K562 (cell line): ENCODE measurements at regions of chr3 and their contacts with region 1.

Region 1: GRCh38 chr3:196518966-196519717 is 4.0 kb upstream of the SMCO1 start:
- DNase-seq: peak; percentile 77 to 95 (median 80)
- ATAC-seq: peak; percentile 89
- H3K4me3 ChIP-seq: no peak overlapping the region
- H3K27ac ChIP-seq: peak overlapping the region; percentile 61; the same call in 2 of the 3 replicates
- H3K4me1 ChIP-seq: peaks cover 12 to 48% of the 10 kb centered on the region in 2 experiments
- H3K27me3 ChIP-seq: no peaks in the 10 kb centered on the region
- CTCF ChIP-seq: peak; percentile 78 to 96 (median 83)
- EP300 ChIP-seq: 0 out of 2 replicates have a peak, but pooled peaks have one; percentile 37
- POLR2A ChIP-seq: no peak
- RAD21 ChIP-seq: peak; percentile 96 to 97

Region 2: DNA sequence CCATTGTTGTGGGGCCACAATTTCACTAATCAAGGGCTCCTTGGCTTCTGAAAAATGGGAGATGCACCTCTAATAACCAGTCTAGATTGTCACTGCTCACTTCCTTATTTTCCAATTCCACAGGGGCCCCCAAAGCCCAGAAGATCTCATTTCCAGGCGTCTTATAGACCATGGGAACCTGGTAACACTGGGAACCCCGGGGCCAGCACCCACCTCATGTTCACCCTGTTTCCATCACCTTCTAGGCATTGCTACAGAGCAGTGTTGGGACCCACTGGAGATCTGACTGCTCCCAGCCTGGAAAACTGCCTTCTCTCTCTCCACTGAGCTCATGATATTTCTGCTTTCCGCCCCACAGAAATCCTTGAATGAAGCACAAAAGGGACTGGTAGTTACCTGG is 498.8 kb before region 1 on chr3:
- CTCF ChIA-PET with region 1: interaction called, 7 read pairs
- POLR2A ChIA-PET with region 1: no interaction called
- in situ Hi-C with region 1: loop called (anchors 5 kb)
- intact Hi-C with region 1: loop called (anchors 1 kb)
- DNase-seq: no peak
- ATAC-seq: no peak
- H3K4me3 ChIP-seq: no peak overlapping the region
- H3K27ac ChIP-seq: no peak overlapping the region
- H3K4me1 ChIP-seq: peaks cover 6 to 7% of the 10 kb centered on the region in 2 experiments; a peak in 4 of 5 replicates
- H3K27me3 ChIP-seq: no peaks in the 10 kb centered on the region
- CTCF ChIP-seq: no peak
- EP300 ChIP-seq: no peak
- POLR2A ChIP-seq: no peak
- RAD21 ChIP-seq: no peak

Region 3: GRCh38 chr3:196202516-196202970 is 316.6 kb before region 1 on chr3:
- CTCF ChIA-PET with region 1: interaction called, 3 read pairs
- POLR2A ChIA-PET with region 1: interaction called, 3 read pairs
- in situ Hi-C with region 1: no loop called
- intact Hi-C with region 1: loop called (anchors 2 kb)
- DNase-seq: no peak
- ATAC-seq: peak; percentile 33
- H3K4me3 ChIP-seq: no peak overlapping the region
- H3K27ac ChIP-seq: no peak overlapping the region
- H3K4me1 ChIP-seq: peaks cover 7 to 33% of the 10 kb centered on the region in 2 experiments; a peak in 4 of 5 replicates
- H3K27me3 ChIP-seq: no peaks in the 10 kb centered on the region
- CTCF ChIP-seq: no peak
- EP300 ChIP-seq: no peak
- POLR2A ChIP-seq: no peak
- RAD21 ChIP-seq: no peak

Region 4: GRCh38 chr3:196423044-196423781 is 95.9 kb before region 1 on chr3:
- CTCF ChIA-PET with region 1: no interaction called
- POLR2A ChIA-PET with region 1: no interaction called
- in situ Hi-C with region 1: no loop called
- intact Hi-C with region 1: no loop called
- DNase-seq: peak in 2 of 4 experiments; percentile 33 to 41
- ATAC-seq: peak; percentile 71
- H3K4me3 ChIP-seq: no peak overlapping the region
- H3K27ac ChIP-seq: no peak overlapping the region; the same call in 2 of the 3 replicates
- H3K4me1 ChIP-seq: peaks cover 14 to 17% of the 10 kb centered on the region in 2 experiments; a peak in 4 of 5 replicates
- H3K27me3 ChIP-seq: no peaks in the 10 kb centered on the region
- CTCF ChIP-seq: 0 out of 6 replicates have a peak, but pooled peaks of 1 of the 3 experiments have one; percentile 5
- EP300 ChIP-seq: no peak
- POLR2A ChIP-seq: no peak
- RAD21 ChIP-seq: no peak

Region 5: DNA sequence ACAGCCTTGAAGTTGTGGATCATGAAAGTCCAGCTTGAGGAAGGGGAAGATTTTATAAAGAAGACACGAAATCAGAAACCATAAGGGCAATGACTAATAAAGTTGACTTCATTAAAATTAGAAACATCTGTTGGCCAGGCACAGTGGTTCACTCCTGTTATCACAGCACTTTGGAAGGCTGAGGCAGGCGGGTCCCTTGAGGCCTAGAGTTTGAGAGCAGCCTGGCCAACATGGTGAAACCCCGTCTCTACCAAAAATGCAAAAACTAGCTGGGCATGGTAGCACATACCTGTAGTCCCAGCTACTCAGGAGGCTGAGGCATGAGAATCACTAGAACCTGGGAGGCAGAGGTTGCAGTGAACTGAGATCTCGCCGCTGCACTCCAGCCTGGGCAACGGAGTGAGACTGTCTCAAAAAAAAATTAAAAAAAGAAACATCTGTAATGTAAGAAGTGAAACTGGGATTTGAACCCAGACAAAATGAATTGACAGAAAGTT is 79.1 kb before region 1 on chr3:
- CTCF ChIA-PET with region 1: no interaction called
- POLR2A ChIA-PET with region 1: no interaction called
- in situ Hi-C with region 1: no loop called
- intact Hi-C with region 1: loop called (anchors 2 kb)
- DNase-seq: no peak
- ATAC-seq: no peak
- H3K4me3 ChIP-seq: no peak overlapping the region
- H3K27ac ChIP-seq: no peak overlapping the region
- H3K4me1 ChIP-seq: peaks cover 0 to 5% of the 10 kb centered on the region in 2 experiments; a peak in 3 of 5 replicates
- H3K27me3 ChIP-seq: no peaks in the 10 kb centered on the region
- CTCF ChIP-seq: no peak
- EP300 ChIP-seq: no peak
- POLR2A ChIP-seq: no peak
- RAD21 ChIP-seq: no peak

Region 6: DNA sequence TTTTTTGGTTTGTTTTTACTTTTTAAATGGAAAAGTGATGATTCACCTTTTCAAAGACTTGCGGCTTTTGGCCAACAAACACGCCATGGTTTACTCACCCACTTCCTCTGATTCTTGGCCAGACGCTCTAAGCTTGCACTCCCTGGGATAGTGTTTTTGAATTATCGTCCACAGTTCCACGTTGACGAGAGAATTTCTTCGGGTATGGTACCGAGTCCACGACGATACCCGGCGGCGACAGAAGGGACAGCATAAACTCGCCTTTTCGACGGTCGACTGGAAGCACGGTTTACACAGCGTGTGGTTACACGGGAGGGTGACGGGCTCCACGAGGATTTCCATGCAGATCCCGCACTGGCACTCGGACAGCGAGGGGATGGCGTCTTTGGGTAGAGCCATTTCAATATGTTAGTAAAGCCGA is 16.4 kb before region 1 on chr3:
- CTCF ChIA-PET with region 1: no interaction called
- POLR2A ChIA-PET with region 1: interaction called, 4 read pairs
- in situ Hi-C with region 1: no loop called
- intact Hi-C with region 1: loop called (anchors 2 kb)
- DNase-seq: peak; percentile 20 to 62 (median 26)
- ATAC-seq: peak; percentile 33
- H3K4me3 ChIP-seq: peak overlapping the region; percentile 91
- H3K27ac ChIP-seq: peak overlapping the region; percentile 93
- H3K4me1 ChIP-seq: peaks cover 10 to 14% of the 10 kb centered on the region in 2 experiments; a peak in 4 of 5 replicates
- H3K27me3 ChIP-seq: no peaks in the 10 kb centered on the region
- CTCF ChIP-seq: 0 out of 6 replicates have a peak, but pooled peaks of 1 of the 3 experiments have one; percentile 23
- EP300 ChIP-seq: no peak
- POLR2A ChIP-seq: no peak
- RAD21 ChIP-seq: no peak